ENCODE measurements at regions of chr10 and their contacts with region 1.

Region 1: GRCh38 chr10:61835069-61835945 is 66.2 kb upstream of the ARID5B start:
- DNase-seq: peak; percentile 70 to 74
- H3K4me3 ChIP-seq: no peak overlapping the region
- H3K4me3 Mint-ChIP-seq: peak overlapping the region; percentile 58
- H3K27ac Mint-ChIP-seq: peak overlapping the region; percentile 94
- H3K4me1 ChIP-seq: peaks cover 80% of the 10 kb centered on the region
- H3K4me1 Mint-ChIP-seq: peaks cover 61% of the 10 kb centered on the region
- H3K27me3 ChIP-seq: no peaks in the 10 kb centered on the region
- H3K27me3 Mint-ChIP-seq: no peaks in the 10 kb centered on the region
- CTCF ChIP-seq: peak; percentile 75 to 85

Region 2: GRCh38 chr10:61475449-61475873 is 359.8 kb before region 1 on chr10:
- CTCF ChIA-PET with region 1: no interaction called
- POLR2A ChIA-PET with region 1: no interaction called
- intact Hi-C with region 1: loop called (anchors 10 kb)
- DNase-seq: no peak
- H3K4me3 ChIP-seq: no peak overlapping the region
- H3K4me3 Mint-ChIP-seq: no peak overlapping the region
- H3K27ac Mint-ChIP-seq: no peak overlapping the region
- H3K4me1 ChIP-seq: no peaks in the 10 kb centered on the region
- H3K4me1 Mint-ChIP-seq: no peaks in the 10 kb centered on the region
- H3K27me3 ChIP-seq: no peaks in the 10 kb centered on the region
- H3K27me3 Mint-ChIP-seq: peaks cover 9% of the 10 kb centered on the region
- CTCF ChIP-seq: no peak

Region 3: DNA sequence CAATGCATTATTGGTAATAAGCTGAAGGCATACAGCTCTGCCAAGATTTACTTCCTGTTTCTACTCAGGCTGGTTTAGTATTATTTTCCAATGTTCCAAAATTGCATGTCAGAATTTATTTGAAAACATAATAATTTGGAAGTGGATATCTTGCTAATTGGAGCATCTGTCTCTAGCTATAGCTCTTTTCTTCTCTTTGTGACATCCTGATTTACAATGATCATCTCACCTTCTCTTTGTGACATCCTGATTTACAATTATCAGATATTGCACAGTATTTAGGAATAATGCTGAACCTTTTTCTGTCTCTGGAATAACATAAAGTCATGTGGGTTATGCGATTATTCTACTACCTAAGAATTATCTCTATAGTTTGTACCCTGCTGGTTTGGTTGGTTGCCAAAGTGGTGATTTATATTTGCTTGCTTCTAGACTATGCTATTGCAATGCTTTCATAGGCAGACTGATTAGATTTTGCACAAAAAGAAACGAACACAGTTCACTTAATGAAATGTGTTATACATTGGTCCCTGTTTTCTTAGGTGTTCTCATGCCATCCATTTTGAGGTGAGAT is 216.8 kb before region 1 on chr10:
- CTCF ChIA-PET with region 1: no interaction called
- POLR2A ChIA-PET with region 1: no interaction called
- intact Hi-C with region 1: no loop called
- DNase-seq: no peak
- H3K4me3 ChIP-seq: no peak overlapping the region
- H3K4me3 Mint-ChIP-seq: no peak overlapping the region
- H3K27ac Mint-ChIP-seq: no peak overlapping the region
- H3K4me1 ChIP-seq: no peaks in the 10 kb centered on the region
- H3K4me1 Mint-ChIP-seq: peaks cover 5% of the 10 kb centered on the region
- H3K27me3 ChIP-seq: no peaks in the 10 kb centered on the region
- H3K27me3 Mint-ChIP-seq: peaks cover 9% of the 10 kb centered on the region
- CTCF ChIP-seq: no peak

Region 4: DNA sequence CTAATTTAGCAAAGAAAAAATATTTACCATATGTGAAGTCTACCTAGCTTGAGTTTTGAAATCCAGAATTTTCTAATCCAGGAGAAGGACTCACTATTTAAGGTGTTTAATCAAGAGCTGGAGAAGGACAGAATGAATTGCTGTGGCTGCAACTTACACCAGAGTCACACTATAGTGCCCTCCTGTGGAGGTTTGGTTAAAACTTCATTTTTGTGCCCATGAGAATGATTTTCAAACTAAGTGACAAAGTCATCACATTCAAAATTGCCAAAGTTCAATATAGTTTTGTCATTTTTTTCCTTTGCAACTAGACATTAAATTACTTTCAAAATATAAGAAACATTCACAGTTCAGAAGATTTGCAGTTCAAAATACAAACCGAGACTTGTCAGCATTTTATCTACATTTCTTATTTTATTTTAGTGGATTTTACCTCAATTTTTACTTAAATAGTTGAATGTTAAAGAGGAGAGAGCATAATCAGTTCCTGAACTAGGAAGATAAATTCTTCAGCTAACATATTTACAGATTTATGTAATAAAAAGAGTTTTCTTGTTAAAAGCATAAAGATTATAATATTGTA is 101.9 kb before region 1 on chr10:
- CTCF ChIA-PET with region 1: interaction called, 10 read pairs
- POLR2A ChIA-PET with region 1: no interaction called
- intact Hi-C with region 1: loop called (anchors 1 kb)
- DNase-seq: peak in 1 of 2 experiments; percentile 71
- H3K4me3 ChIP-seq: no peak overlapping the region
- H3K4me3 Mint-ChIP-seq: no peak overlapping the region
- H3K27ac Mint-ChIP-seq: no peak overlapping the region
- H3K4me1 ChIP-seq: no peaks in the 10 kb centered on the region
- H3K4me1 Mint-ChIP-seq: peaks cover 7% of the 10 kb centered on the region
- H3K27me3 ChIP-seq: no peaks in the 10 kb centered on the region
- H3K27me3 Mint-ChIP-seq: peaks cover 10% of the 10 kb centered on the region
- CTCF ChIP-seq: peak; percentile 80 to 87

Region 5: DNA sequence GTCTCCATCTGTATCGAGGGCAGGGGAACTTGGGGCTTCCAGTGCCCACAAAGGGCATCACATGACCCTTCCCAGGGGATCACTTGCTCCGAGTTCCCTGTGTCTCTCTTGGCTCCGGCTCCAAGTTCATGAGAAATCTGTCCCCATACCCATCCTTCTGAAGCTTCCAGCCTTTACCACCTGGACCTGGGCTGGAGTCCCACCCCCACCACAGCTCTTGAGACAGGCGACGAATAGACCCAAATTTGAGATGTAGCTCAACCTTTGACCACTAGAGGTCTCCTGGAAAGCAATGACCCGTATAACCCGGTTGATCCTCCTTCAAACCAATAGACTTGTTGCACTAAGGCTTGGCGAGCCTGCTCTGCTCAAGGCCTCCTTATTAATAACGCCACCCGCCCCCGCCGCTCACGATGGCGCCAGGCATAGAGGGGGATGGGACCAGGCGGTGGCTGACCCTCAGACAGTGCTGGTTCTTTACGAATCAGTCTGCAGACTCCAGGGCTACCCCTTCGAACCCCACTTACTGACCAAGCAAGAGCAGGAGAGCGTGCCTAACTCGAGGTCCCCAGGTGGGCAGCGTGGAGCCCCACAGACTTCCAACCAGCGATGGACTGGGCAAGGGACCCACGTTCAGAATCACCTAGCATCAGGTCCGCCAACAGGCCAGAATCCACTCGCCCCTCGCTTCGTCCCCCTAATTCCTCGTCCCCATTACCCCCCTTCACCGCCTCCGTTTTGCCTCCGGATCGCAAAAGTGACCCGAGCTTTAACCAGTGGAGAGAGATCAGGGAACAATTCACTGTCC is 61.8 kb after region 1 on chr10:
- CTCF ChIA-PET with region 1: interaction called, 17 read pairs
- POLR2A ChIA-PET with region 1: interaction called, 12 read pairs
- intact Hi-C with region 1: no loop called
- DNase-seq: peak; percentile 78 to 83
- H3K4me3 ChIP-seq: no peak overlapping the region
- H3K4me3 Mint-ChIP-seq: no peak overlapping the region
- H3K27ac Mint-ChIP-seq: peak overlapping the region; percentile 99
- H3K4me1 ChIP-seq: peaks cover 42% of the 10 kb centered on the region
- H3K4me1 Mint-ChIP-seq: peaks cover 32% of the 10 kb centered on the region
- H3K27me3 ChIP-seq: no peaks in the 10 kb centered on the region
- H3K27me3 Mint-ChIP-seq: no peaks in the 10 kb centered on the region
- CTCF ChIP-seq: peak; percentile 71 to 88

Region 6: GRCh38 chr10:61923213-61923949 is 88.1 kb after region 1 on chr10:
- CTCF ChIA-PET with region 1: no interaction called
- POLR2A ChIA-PET with region 1: no interaction called
- intact Hi-C with region 1: no loop called
- DNase-seq: no peak
- H3K4me3 ChIP-seq: no peak overlapping the region
- H3K4me3 Mint-ChIP-seq: no peak overlapping the region
- H3K27ac Mint-ChIP-seq: peak overlapping the region; percentile 12
- H3K4me1 ChIP-seq: peaks cover 20% of the 10 kb centered on the region
- H3K4me1 Mint-ChIP-seq: peaks cover 43% of the 10 kb centered on the region
- H3K27me3 ChIP-seq: no peaks in the 10 kb centered on the region
- H3K27me3 Mint-ChIP-seq: no peaks in the 10 kb centered on the region
- CTCF ChIP-seq: no peak

Region 7: GRCh38 chr10:61952028-61952674 is 116.8 kb after region 1 on chr10:
- CTCF ChIA-PET with region 1: interaction called, 3 read pairs
- POLR2A ChIA-PET with region 1: interaction called, 5 read pairs
- intact Hi-C with region 1: loop called (anchors 1 kb)
- DNase-seq: peak; percentile 87 to 89
- H3K4me3 ChIP-seq: no peak overlapping the region
- H3K4me3 Mint-ChIP-seq: peak overlapping the region; percentile 60
- H3K27ac Mint-ChIP-seq: peak overlapping the region; percentile 67
- H3K4me1 ChIP-seq: peaks cover 54% of the 10 kb centered on the region
- H3K4me1 Mint-ChIP-seq: peaks cover 47% of the 10 kb centered on the region
- H3K27me3 ChIP-seq: no peaks in the 10 kb centered on the region
- H3K27me3 Mint-ChIP-seq: no peaks in the 10 kb centered on the region
- CTCF ChIP-seq: no peak

Region 8: DNA sequence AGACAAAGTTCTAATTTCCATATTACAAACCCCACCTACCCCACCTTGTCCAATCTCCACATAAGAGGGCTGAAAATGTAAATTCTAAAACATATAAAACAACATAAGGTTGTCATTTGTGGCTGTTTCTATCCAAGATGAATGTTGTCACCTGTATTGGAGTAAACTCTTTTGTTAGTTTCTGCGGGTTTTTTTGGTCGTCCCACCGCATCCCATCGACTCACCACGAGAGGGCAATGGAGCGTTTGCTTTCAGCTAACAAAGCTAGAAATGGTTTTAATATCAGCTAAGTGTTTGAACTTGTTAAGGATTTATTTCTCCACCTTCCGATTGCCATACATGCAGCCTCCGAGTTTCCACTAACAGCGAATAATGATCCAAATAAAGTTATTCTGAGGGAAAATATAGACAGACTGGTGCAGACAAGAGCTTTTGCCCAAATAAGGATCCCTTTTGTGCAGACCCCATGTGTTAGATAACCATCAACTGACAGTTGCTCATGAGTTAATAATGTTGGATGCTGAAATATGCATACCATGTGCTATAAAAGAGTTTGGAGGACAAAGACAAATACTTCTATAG is 203.4 kb after region 1 on chr10:
- CTCF ChIA-PET with region 1: interaction called, 7 read pairs
- POLR2A ChIA-PET with region 1: no interaction called
- intact Hi-C with region 1: loop called (anchors 1 kb)
- DNase-seq: peak; percentile 84 to 85
- H3K4me3 ChIP-seq: no peak overlapping the region
- H3K4me3 Mint-ChIP-seq: peak overlapping the region; percentile 50
- H3K27ac Mint-ChIP-seq: peak overlapping the region; percentile 56
- H3K4me1 ChIP-seq: peaks cover 95% of the 10 kb centered on the region
- H3K4me1 Mint-ChIP-seq: peaks cover 93% of the 10 kb centered on the region
- H3K27me3 ChIP-seq: no peaks in the 10 kb centered on the region
- H3K27me3 Mint-ChIP-seq: no peaks in the 10 kb centered on the region
- CTCF ChIP-seq: peak; percentile 93 to 98

Region 9: DNA sequence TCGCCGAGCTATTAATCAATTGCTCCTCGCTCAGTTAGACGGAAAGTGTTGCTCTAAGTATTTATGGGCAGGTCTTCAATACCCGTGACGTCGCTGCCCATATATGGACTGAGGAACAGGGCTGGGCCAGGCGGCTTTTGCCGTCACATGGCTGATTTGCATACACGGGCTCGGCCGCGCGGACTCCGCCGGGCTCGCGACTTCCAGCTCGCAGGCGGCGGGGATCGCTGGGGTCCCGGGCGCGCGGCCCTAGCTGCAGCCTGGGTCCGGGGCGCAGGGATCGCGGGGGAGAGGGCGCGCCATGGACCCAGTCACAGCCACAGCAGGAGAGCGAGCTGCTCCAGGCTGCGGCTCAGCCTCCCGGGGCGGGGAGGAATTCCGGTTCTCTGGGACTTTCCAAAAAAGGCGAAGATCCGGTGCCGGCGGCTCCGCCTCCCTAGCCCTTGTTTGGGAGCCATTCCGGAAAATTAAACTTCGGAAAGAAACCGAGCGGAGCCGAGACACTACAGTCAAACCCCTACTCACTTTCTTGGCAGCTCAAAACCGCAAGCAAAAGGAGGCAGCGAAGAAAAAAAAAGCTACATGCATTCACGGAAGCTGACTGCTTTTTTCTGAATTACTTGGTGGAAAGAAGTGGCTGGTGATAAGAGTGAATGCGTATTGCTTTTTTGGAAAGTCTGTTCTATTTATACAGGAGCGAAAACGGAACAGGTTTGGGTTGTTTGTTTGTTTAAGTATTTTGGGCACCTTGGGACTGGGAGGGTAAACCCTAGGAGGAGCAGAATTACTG is 981.2 kb after region 1 on chr10 and contains the start of gene EGR2:
- CTCF ChIA-PET with region 1: no interaction called
- POLR2A ChIA-PET with region 1: no interaction called
- intact Hi-C with region 1: loop called (anchors 5 kb)
- DNase-seq: peak; percentile 96 to 97
- H3K4me3 ChIP-seq: peak within 1 kb of the TSS; percentile 55
- H3K4me3 Mint-ChIP-seq: peak within 1 kb of the TSS; percentile 87
- H3K27ac Mint-ChIP-seq: peak within 1 kb of the TSS; percentile 74
- H3K4me1 ChIP-seq: peaks cover 17% of the 10 kb centered on the region
- H3K4me1 Mint-ChIP-seq: peaks cover 20% of the 10 kb centered on the region
- H3K27me3 ChIP-seq: peaks cover 16% of the 10 kb centered on the region
- H3K27me3 Mint-ChIP-seq: peaks cover 40% of the 10 kb centered on the region
- CTCF ChIP-seq: no peak
- total RNA-seq, gene EGR2: 0.30 and 0.61 TPM in 2 replicates

Measured in Caco-2 (cell line).